Right ventricle myocardium superior (tissue), 1 donor: ENCODE measurements at regions of chr1 and their contacts with region 1.

Region 1: GRCh38 chr1:173867753-173868265 is at the start of gene GAS5:
- DNase-seq: peak; percentile 99
- ATAC-seq: peak; percentile 95
- total RNA-seq, gene GAS5: 50.2 TPM

Region 2: DNA sequence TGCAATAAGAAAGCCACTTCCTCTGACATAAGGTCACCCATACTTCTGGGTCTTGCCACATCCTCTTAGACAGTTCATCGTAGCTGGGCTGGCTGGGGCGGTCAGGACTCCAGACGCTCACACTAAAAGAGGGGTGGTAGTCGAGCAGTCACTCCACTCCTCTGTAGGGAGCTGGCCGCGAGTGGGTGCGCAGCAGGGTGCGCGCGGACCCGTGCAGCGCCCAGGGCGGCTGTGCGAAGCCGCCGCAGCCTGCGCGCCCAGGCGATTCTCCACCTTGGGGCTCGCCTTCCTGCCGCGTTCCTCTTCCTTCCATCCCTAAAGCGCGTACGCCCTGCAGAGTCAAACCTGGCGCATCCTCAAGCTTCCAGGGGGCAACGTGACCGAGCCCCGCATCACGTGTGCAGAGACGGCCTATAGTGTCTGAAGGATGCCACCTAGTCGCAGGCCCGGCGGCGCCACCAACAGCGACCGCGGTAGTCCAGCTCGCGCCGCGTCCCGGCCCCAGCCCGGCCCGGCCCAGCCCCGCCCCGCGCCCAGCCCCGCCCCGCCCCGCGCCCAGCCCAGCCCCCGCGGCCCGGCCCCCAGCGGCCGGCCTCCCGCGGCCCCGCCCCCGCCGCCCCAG is 391.0 kb before region 1 on chr1:
- intact Hi-C with region 1: loop called (anchors 5 kb)
- DNase-seq: peak; percentile 97
- ATAC-seq: peak; percentile 89

Region 3: GRCh38 chr1:173758980-173759609 is 108.7 kb before region 1 on chr1:
- intact Hi-C with region 1: no loop called
- DNase-seq: no peak
- ATAC-seq: no peak

Region 4: GRCh38 chr1:173960625-173961024 is 92.8 kb after region 1 on chr1:
- intact Hi-C with region 1: loop called (anchors 10 kb)
- DNase-seq: no peak
- ATAC-seq: no peak